ENCODE measurements at regions of chr2 and their contacts with region 1.

Region 1: GRCh38 chr2:201950606-201951005 is 83.0 kb upstream of the FZD7 start:
- DNase-seq: peak; percentile 44
- H3K4me3 ChIP-seq: no peak overlapping the region
- H3K27ac ChIP-seq: no peak overlapping the region
- H3K4me1 ChIP-seq: peaks cover 6% of the 10 kb centered on the region
- H3K27me3 ChIP-seq: no peaks in the 10 kb centered on the region
- CTCF ChIP-seq: no peak

Region 2: GRCh38 chr2:201451292-201452057 is 499.1 kb before region 1 on chr2 and contains the starts of genes STRADB and TRAK2:
- CTCF ChIA-PET with region 1: no interaction called
- dilution Hi-C with region 1: no loop called
- in situ Hi-C with region 1: no loop called
- intact Hi-C with region 1: no loop called
- DNase-seq: peak; percentile 91
- H3K4me3 ChIP-seq: peak within 1 kb of the TSS; percentile 60 to 93 (median 88)
- H3K27ac ChIP-seq: peak within 1 kb of the TSS; percentile 72
- H3K4me1 ChIP-seq: peaks cover 20% of the 10 kb centered on the region
- H3K27me3 ChIP-seq: no peaks in the 10 kb centered on the region
- CTCF ChIP-seq: no peak
- total RNA-seq, gene STRADB: 12.8 to 19.2 TPM
- total RNA-seq, gene TRAK2: 18.9 to 28.7 TPM

Region 3: GRCh38 chr2:202025816-202026215 is 75.2 kb after region 1 on chr2:
- CTCF ChIA-PET with region 1: no interaction called
- dilution Hi-C with region 1: loop called (anchors 5 kb)
- in situ Hi-C with region 1: no loop called
- intact Hi-C with region 1: no loop called
- DNase-seq: no peak
- H3K4me3 ChIP-seq: no peak overlapping the region
- H3K27ac ChIP-seq: no peak overlapping the region
- H3K4me1 ChIP-seq: peaks cover 4% of the 10 kb centered on the region
- H3K27me3 ChIP-seq: no peaks in the 10 kb centered on the region
- CTCF ChIP-seq: no peak

Region 4: DNA sequence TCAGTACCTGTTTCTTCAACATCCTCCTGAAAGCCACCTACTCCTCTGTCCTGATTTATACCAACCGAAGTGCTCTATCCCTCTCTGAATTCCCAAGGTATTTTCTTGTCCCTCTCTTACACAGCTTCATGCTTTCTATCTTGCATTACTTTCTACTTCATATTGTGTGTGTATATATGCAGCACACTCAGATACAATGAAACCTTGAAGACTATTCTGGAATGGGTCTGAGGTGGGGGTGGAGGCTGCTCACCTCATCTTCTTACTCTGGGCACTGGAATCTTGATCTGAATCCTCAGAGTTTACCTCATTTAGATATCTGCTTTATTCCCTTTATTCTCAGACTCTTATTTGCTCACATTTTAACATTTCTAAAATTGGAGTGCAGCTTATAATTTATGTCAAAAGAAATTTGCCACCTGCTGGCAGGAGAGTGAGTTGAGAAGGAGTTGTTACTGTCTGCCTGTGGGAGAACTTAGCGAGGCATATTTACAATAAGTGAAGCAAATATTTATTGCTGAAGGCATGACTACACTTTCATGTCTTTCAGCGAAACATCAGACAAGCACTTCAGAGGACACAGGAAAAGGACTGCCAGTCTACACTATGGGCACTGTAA is 105.9 kb after region 1 on chr2:
- CTCF ChIA-PET with region 1: no interaction called
- dilution Hi-C with region 1: no loop called
- in situ Hi-C with region 1: no loop called
- intact Hi-C with region 1: no loop called
- DNase-seq: no peak
- H3K4me3 ChIP-seq: no peak overlapping the region
- H3K27ac ChIP-seq: no peak overlapping the region
- H3K4me1 ChIP-seq: no peaks in the 10 kb centered on the region
- H3K27me3 ChIP-seq: peaks cover 3% of the 10 kb centered on the region
- CTCF ChIP-seq: peak; percentile 22 to 47

Region 5: DNA sequence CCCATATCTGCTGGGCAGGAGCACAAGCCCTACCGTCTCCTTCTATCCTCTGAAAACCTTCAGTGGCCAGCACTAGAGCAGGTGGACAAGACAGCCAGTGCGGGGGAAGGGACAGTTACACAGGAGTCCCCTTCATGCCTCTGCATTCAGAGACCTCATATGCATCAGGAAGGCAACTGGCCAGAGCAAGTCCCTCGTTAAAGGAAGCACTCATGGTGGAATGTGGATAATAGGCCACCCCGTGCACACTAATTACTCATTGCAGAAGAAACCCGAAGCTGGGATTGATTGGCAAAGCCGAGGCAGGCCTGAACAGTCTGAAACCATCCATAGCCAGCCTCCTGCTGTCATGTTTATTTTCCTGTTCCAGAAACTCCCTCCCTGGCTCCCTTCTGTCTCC is 133.7 kb after region 1 on chr2:
- CTCF ChIA-PET with region 1: no interaction called
- dilution Hi-C with region 1: no loop called
- in situ Hi-C with region 1: no loop called
- intact Hi-C with region 1: no loop called
- DNase-seq: no peak
- H3K4me3 ChIP-seq: no peak overlapping the region
- H3K27ac ChIP-seq: no peak overlapping the region
- H3K4me1 ChIP-seq: no peaks in the 10 kb centered on the region
- H3K27me3 ChIP-seq: no peaks in the 10 kb centered on the region
- CTCF ChIP-seq: no peak

Measured in mammary epithelial cell (primary cell).